Heart right ventricle (tissue), 16 donors: ENCODE measurements at regions of chr9 and their contacts with region 1.

Region 1: DNA sequence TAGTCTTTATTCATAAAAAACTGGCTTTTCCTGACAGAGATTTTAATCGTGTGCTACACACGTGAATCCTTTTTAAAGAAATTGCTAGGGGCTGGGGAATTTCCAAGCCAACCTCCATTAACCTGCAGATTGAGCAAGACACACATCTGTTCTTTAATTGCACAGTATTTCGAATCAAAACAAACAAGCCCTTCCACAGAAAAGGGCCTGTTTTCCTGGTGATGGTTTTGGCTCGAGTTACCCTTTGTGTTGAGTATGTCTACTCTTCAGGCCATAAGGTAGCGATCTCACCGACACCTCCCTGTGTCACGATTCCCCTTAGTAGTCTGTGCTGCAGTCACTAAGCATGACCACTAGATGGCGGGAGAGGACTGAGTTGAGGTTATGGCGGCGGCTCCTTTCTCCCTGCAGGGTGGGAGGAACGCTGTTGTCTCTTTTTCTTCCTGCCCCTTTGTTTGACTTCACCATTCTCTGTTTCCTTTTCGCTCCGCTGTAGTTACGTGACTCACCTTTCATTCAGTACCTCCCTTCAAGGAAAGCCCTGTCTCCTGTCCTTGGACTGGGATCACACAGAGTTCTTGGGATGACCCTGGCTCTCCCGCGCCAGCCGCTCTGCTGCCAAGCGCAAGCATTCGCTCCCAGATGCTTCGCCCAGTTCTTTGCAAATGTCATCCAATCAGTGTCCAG is 137.1 kb upstream of the SLC24A2 start:
- DNase-seq: peak; percentile 35 to 72
- ATAC-seq: peak; percentile 84 to 96 (median 94)
- H3K4me3 ChIP-seq: peak overlapping the region in 9 of 10 donors; percentile 2 to 51 (median 45)
- H3K27ac ChIP-seq: no peak overlapping the region
- H3K4me1 ChIP-seq: peaks cover 0 to 11% (median 6%) of the 10 kb centered on the region in 9 donors
- H3K27me3 ChIP-seq: peaks cover 0 to 12% (median 0%) of the 10 kb centered on the region in 7 donors
- CTCF ChIP-seq: peak; percentile 92 to 99 (median 97)

Region 2: GRCh38 chr9:19481971-19482404 is 444.0 kb before region 1 on chr9:
- intact Hi-C with region 1: loop called in 2 of 10 experiments (anchors 10 kb)
- DNase-seq: no peak
- ATAC-seq: peak in 4 of 8 donors; percentile 29 to 52 (median 38)
- H3K4me3 ChIP-seq: no peak overlapping the region
- H3K27ac ChIP-seq: peak overlapping the region in 4 of 10 donors; percentile 10 to 64 (median 31)
- H3K4me1 ChIP-seq: peaks cover 0 to 12% (median 0%) of the 10 kb centered on the region in 9 donors
- H3K27me3 ChIP-seq: no peaks in the 10 kb centered on the region
- CTCF ChIP-seq: no peak

Region 3: GRCh38 chr9:19985081-19985480 is 59.1 kb after region 1 on chr9:
- intact Hi-C with region 1: no loop called
- DNase-seq: no peak
- ATAC-seq: no peak
- H3K4me3 ChIP-seq: no peak overlapping the region
- H3K27ac ChIP-seq: no peak overlapping the region
- H3K4me1 ChIP-seq: no peaks in the 10 kb centered on the region
- H3K27me3 ChIP-seq: no peaks in the 10 kb centered on the region
- CTCF ChIP-seq: no peak

Region 4: GRCh38 chr9:20292002-20292401 is 366.0 kb after region 1 on chr9:
- intact Hi-C with region 1: loop called in 2 of 10 experiments (anchors 10 kb)
- DNase-seq: no peak
- ATAC-seq: no peak
- H3K4me3 ChIP-seq: no peak overlapping the region
- H3K27ac ChIP-seq: no peak overlapping the region
- H3K4me1 ChIP-seq: peaks cover 0 to 6% (median 0%) of the 10 kb centered on the region in 9 donors
- H3K27me3 ChIP-seq: no peaks in the 10 kb centered on the region
- CTCF ChIP-seq: no peak

Region 5: GRCh38 chr9:20728493-20729220 is 802.7 kb after region 1 on chr9:
- intact Hi-C with region 1: loop called in 1 of 10 experiments (anchors 10 kb)
- DNase-seq: no peak
- ATAC-seq: peak in 2 of 8 donors; percentile 28 to 68
- H3K4me3 ChIP-seq: no peak overlapping the region
- H3K27ac ChIP-seq: no peak overlapping the region
- H3K4me1 ChIP-seq: peaks cover 5 to 30% (median 11%) of the 10 kb centered on the region in 9 donors
- H3K27me3 ChIP-seq: no peaks in the 10 kb centered on the region
- CTCF ChIP-seq: no peak

Region 6: DNA sequence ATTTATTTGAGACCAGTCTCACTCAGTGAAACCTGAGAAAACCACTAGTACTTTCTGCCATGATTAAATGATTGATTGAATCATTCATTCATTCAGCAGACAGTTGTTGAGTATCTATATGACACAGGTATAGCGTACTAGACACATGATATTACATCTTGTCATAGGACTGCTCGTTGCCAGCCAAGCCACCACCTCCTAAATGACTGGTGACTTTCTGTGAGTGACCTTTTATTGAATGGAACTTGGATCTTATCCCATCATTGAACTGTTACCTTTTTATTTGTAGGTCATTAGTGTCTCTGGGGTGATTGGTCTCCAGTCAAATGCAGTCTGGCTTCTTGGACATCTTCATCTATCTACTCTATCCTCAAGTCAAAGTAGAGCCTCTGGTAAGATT is 1024.7 kb after region 1 on chr9:
- intact Hi-C with region 1: loop called in 2 of 10 experiments (anchors 10 kb)
- DNase-seq: no peak
- ATAC-seq: no peak
- H3K4me3 ChIP-seq: no peak overlapping the region
- H3K27ac ChIP-seq: no peak overlapping the region
- H3K4me1 ChIP-seq: no peaks in the 10 kb centered on the region
- H3K27me3 ChIP-seq: no peaks in the 10 kb centered on the region
- CTCF ChIP-seq: no peak